Activated CD8-positive, alpha-beta T cell treated with anti-CD3 and anti-CD28 coated beads for 36 hours (primary cell): ENCODE measurements at regions of chr7 and their contacts with region 1.

Region 1: DNA sequence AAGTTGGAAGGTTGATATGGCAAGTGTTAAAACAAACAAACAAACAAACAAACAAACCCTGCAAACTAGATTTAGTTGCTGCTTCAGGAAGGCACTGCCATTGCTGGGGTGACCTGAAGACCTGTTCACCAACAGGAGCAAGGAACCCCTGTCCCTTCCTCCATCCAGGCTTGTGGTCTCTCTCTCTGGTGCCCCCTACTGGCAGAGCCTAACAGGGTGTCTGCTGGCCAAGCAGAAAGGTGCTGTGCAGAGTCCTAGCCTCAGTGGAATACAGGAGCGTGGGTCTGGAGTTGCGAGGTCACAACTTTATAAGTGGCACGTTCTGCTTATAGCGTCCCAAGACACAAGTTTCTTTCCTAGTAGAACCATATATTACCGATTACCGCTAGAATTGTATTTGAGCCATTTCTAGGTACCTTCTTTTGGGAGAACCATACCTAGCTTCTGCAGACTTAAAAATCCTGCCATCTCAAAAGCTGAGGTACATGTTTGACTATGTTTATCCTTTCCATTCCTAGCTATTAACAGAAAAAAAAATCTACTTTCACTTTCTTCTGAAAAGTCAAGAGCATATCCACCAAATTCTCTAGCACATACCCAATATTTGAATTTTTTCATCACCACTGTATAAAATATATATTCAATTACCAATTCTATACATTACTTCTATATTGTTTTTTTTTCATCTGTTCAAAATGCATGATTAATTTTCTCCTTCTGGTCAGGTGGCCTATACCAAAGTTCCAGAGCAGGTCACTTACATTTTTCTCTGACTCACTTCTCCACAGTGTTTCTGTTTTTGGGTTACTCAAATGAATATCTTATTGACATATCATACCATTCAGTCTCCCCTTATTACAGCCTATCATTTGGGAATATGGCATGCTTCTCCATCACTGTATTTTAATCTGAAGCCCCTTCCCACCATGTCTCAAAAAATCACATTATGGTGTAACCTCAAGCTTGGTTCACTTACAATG is 29.1 kb upstream of the CALD1 start:
- DNase-seq: peak; percentile 81
- ATAC-seq: peak; percentile 84
- H3K4me3 Mint-ChIP-seq: no peak overlapping the region
- H3K27ac Mint-ChIP-seq: no peak overlapping the region
- H3K4me1 Mint-ChIP-seq: no peaks in the 10 kb centered on the region
- H3K27me3 Mint-ChIP-seq: peaks cover 2% of the 10 kb centered on the region
- CTCF ChIP-seq: peak; percentile 73

Region 2: DNA sequence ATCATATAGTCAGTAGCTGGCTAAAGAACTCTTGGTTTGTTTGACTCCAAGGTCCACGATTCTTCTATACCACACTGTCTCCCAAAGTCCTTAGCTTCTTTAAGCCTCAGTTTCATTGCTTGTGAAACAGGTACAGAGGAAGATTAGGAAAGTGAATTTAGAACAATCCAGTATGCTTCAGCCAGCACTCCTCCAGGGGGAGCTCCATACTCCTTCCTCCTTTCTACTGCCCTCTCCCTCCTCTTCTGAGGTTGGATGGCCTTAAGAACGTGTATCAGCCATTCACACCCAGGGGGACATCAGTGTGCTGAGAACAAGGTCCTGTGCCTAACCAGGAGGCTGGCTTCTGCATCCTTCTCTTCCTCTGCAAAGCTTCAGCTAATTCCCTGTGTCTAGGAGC is 25.8 kb before region 1 on chr7:
- CTCF ChIA-PET with region 1: interaction called, 51 read pairs
- POLR2A ChIA-PET with region 1: interaction called, 3 read pairs
- intact Hi-C with region 1: no loop called
- DNase-seq: peak; percentile 8
- ATAC-seq: no peak
- H3K4me3 Mint-ChIP-seq: no peak overlapping the region
- H3K27ac Mint-ChIP-seq: no peak overlapping the region
- H3K4me1 Mint-ChIP-seq: no peaks in the 10 kb centered on the region
- H3K27me3 Mint-ChIP-seq: no peaks in the 10 kb centered on the region
- CTCF ChIP-seq: no peak

Region 3: DNA sequence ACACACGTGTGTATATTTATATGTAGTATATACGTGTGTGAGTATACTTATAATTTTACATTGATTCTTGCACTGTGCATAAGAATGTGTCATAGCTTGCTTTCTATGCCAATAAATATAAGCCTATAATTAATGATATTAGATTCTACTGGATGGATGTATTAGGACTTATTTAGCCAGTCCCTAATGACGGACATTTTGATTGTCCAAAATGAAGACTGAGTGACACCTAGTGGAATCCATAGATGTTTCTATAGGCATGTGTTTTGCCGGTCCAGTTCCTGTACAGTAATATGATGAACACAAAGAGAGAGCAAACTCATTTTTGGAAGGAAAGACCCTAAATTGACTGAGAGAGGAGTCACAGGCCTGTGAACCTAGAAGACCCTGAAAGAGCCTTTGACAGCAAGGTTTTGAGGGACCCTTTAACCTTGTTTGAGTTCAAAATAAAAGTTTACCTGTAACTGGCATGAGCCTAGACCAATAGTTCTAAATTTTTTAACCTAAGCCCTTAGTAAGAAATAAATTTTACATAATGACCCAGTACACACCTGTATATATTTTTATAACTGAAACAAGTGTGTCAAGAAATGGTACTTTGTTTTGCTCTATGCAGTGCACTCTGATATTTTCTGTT is 193.5 kb after region 1 on chr7:
- CTCF ChIA-PET with region 1: interaction called, 3 read pairs
- POLR2A ChIA-PET with region 1: no interaction called
- intact Hi-C with region 1: loop called (anchors 10 kb)
- DNase-seq: no peak
- ATAC-seq: no peak
- H3K4me3 Mint-ChIP-seq: no peak overlapping the region
- H3K27ac Mint-ChIP-seq: no peak overlapping the region
- H3K4me1 Mint-ChIP-seq: peaks cover 12% of the 10 kb centered on the region
- H3K27me3 Mint-ChIP-seq: peaks cover 2% of the 10 kb centered on the region
- CTCF ChIP-seq: no peak

Region 4: DNA sequence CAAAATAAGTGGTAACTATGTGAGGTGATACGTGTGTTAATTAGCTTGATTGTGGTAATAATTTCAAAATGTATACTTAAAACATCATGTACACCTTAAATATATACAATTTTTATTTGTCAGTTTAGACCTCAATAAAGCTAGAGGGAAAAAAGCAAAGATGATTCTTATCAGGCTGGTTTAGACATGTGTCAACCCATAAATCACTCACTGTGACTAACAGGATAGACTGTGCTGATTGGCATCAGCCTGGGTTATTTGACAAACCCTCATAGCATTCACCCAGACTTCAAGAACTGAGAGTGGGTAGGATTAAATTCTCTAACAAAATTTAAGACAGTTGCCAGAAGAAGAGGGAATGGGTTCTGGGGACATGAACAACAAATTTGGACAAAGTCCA is 323.7 kb after region 1 on chr7:
- CTCF ChIA-PET with region 1: no interaction called
- POLR2A ChIA-PET with region 1: no interaction called
- intact Hi-C with region 1: no loop called
- DNase-seq: no peak
- ATAC-seq: no peak
- H3K4me3 Mint-ChIP-seq: no peak overlapping the region
- H3K27ac Mint-ChIP-seq: no peak overlapping the region
- H3K4me1 Mint-ChIP-seq: no peaks in the 10 kb centered on the region
- H3K27me3 Mint-ChIP-seq: no peaks in the 10 kb centered on the region
- CTCF ChIP-seq: no peak